ENCODE measurements at regions of chr19 and their contacts with region 1.

Region 1: GRCh38 chr19:7069042-7069903 is at the start of gene ZNF557:
- DNase-seq: peak; percentile 68 to 96
- ATAC-seq: peak; percentile 98
- H3K4me3 ChIP-seq: peak within 1 kb of the TSS; percentile 84
- H3K27ac ChIP-seq: peak within 1 kb of the TSS; percentile 92 to 97
- H3K4me1 ChIP-seq: no peaks in the 10 kb centered on the region
- CTCF ChIP-seq: no peak
- EP300 ChIP-seq: no peak
- POLR2A ChIP-seq: peak; percentile 51
- RAD21 ChIP-seq: no peak
- polyA plus RNA-seq, gene ZNF557: 4.2 and 5.0 TPM in 2 replicates

Region 2: GRCh38 chr19:6663236-6664201 is 405.8 kb before region 1 on chr19:
- CTCF ChIA-PET with region 1: no interaction called
- POLR2A ChIA-PET with region 1: interaction called, 10 read pairs
- DNase-seq: no peak
- ATAC-seq: no peak
- H3K4me3 ChIP-seq: no peak overlapping the region
- H3K27ac ChIP-seq: no peak overlapping the region
- H3K4me1 ChIP-seq: no peaks in the 10 kb centered on the region
- CTCF ChIP-seq: no peak
- EP300 ChIP-seq: no peak
- POLR2A ChIP-seq: no peak
- RAD21 ChIP-seq: no peak

Region 3: GRCh38 chr19:7098701-7099596 is 29.7 kb after region 1 on chr19:
- CTCF ChIA-PET with region 1: interaction called, 4 read pairs
- POLR2A ChIA-PET with region 1: interaction called, 18 read pairs
- DNase-seq: peak; percentile 70 to 86
- ATAC-seq: peak; percentile 89 to 96
- H3K4me3 ChIP-seq: peak overlapping the region; percentile 50
- H3K27ac ChIP-seq: peak overlapping the region; percentile 78 to 96
- H3K4me1 ChIP-seq: 0 out of 3 replicates have a peak, but pooled peaks cover 3% of the 10 kb centered on the region
- CTCF ChIP-seq: no peak
- EP300 ChIP-seq: no peak
- POLR2A ChIP-seq: peak; percentile 51
- RAD21 ChIP-seq: no peak

Measured in A549 (cell line).